Breast epithelium (tissue), 4 donors: ENCODE measurements at regions of chr3 and their contacts with region 1.

Region 1: GRCh38 chr3:47515864-47516319 is 2.4 kb upstream of the ELP6 start:
- DNase-seq: no peak
- H3K4me3 ChIP-seq: no peak overlapping the region
- H3K27ac ChIP-seq: no peak overlapping the region
- H3K4me1 ChIP-seq: no peaks in the 10 kb centered on the region
- H3K27me3 ChIP-seq: no peaks in the 10 kb centered on the region
- CTCF ChIP-seq: no peak
- POLR2A ChIP-seq: no peak

Region 2: GRCh38 chr3:47578119-47578632 is 62.3 kb after region 1 on chr3:
- intact Hi-C with region 1: loop called (anchors 2 kb)
- DNase-seq: no peak
- H3K4me3 ChIP-seq: peak overlapping the region; percentile 52 to 86 (median 71)
- H3K27ac ChIP-seq: no peak overlapping the region
- H3K4me1 ChIP-seq: peaks cover 0 to 6% of the 10 kb centered on the region in 2 donors
- H3K27me3 ChIP-seq: peaks cover 6% of the 10 kb centered on the region in 2 donors
- CTCF ChIP-seq: no peak
- POLR2A ChIP-seq: no peak